ENCODE measurements at regions of chr6 and their contacts with region 1.

Region 1: GRCh38 chr6:98834060-98835031 is at the start of gene POU3F2:
- DNase-seq: peak; percentile 7
- H3K4me3 ChIP-seq: peak within 1 kb of the TSS; percentile 59
- CTCF ChIP-seq: no peak

Region 2: GRCh38 chr6:98845211-98846020 is 11.1 kb after region 1 on chr6:
- CTCF ChIA-PET with region 1: interaction called, 13 read pairs
- POLR2A ChIA-PET with region 1: no interaction called
- DNase-seq: peak; percentile 23
- H3K4me3 ChIP-seq: peak overlapping the region; percentile 39
- CTCF ChIP-seq: peak; percentile 94

Region 3: GRCh38 chr6:99013145-99013544 is 178.8 kb after region 1 on chr6:
- CTCF ChIA-PET with region 1: no interaction called
- POLR2A ChIA-PET with region 1: no interaction called
- DNase-seq: peak; percentile 90
- H3K4me3 ChIP-seq: no peak overlapping the region
- CTCF ChIP-seq: no peak

Measured in AG04449 (cell line).